ENCODE measurements at regions of chr15 and their contacts with region 1.

Region 1: GRCh38 chr15:33292717-33293307 is 18.0 kb upstream of the RYR3 start:
- DNase-seq: peak; percentile 69
- H3K4me3 ChIP-seq: no peak overlapping the region
- H3K27ac ChIP-seq: no peak overlapping the region
- H3K4me1 ChIP-seq: peaks cover 3% of the 10 kb centered on the region
- H3K27me3 ChIP-seq: peaks cover 10 to 19% of the 10 kb centered on the region in 2 experiments
- CTCF ChIP-seq: peak; percentile 57 to 59
- POLR2A ChIP-seq: no peak

Region 2: DNA sequence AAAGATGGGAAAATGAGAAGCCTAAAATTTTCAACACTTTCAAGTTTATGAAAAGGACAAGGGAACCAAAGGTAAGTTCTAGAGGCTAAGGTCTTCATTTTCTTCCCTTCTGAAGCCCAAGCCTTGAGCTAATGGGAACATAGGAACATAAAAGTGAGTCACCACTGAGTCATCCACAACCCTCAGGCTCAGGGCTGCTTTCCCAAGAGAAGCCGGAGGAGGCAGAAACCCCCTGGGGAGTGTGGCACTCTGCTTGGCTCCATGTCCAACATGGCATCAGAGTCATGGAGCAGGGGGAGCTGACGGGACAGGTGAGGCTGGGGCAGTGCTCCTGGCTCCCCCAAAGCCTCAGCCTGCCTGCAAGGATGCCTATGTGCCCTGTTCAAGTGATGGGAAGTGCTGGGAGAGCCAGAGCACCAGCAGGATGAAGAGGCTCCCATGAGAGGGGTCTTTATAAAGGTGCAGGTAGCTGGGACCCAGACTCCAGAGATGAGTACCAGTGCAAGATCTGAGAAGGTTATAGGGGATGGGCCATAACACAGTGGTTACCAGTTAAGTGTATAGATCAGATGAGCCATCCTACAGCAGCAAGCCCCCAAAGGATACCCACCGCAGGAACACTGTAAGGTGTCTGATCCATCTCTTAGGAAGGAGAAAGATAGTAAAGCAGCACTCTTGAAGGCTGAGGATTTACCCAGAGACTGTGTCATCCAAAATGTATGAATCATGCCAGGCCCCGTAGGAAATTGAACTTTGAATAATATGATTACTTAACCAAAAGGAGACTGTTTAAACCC is 13.8 kb before region 1 on chr15:
- CTCF ChIA-PET with region 1: interaction called, 41 read pairs
- POLR2A ChIA-PET with region 1: no interaction called
- dilution Hi-C with region 1: no loop called
- intact Hi-C with region 1: no loop called
- DNase-seq: peak; percentile 76
- H3K4me3 ChIP-seq: no peak overlapping the region
- H3K27ac ChIP-seq: no peak overlapping the region
- H3K4me1 ChIP-seq: peaks cover 7% of the 10 kb centered on the region
- H3K27me3 ChIP-seq: no peaks in the 10 kb centered on the region
- CTCF ChIP-seq: peak in 1 of 2 donors; percentile 20
- POLR2A ChIP-seq: no peak

Region 3: DNA sequence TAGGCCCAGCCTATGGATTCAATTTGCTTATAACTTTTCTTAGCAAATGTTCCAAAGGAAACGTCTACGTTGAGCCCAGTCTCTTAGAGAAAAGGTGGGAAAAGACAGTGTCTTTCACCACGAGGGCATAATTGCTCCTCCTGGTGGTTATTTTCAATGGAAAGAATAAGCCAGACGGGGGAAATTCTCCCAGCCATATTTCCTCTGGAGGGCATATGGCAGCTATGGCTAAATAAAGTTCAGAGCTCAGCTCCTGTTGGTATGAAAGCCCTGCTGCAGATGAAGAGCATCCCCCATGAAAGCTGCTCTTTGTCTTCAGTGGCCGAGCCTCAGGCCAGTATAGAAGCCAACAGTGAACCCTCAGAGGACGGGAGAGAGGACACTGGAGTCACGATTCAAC is 315.9 kb after region 1 on chr15:
- CTCF ChIA-PET with region 1: interaction called, 10 read pairs
- POLR2A ChIA-PET with region 1: no interaction called
- dilution Hi-C with region 1: no loop called
- intact Hi-C with region 1: no loop called
- DNase-seq: no peak
- H3K4me3 ChIP-seq: no peak overlapping the region
- H3K27ac ChIP-seq: no peak overlapping the region
- H3K4me1 ChIP-seq: no peaks in the 10 kb centered on the region
- H3K27me3 ChIP-seq: no peaks in the 10 kb centered on the region
- CTCF ChIP-seq: no peak
- POLR2A ChIP-seq: no peak

Region 4: DNA sequence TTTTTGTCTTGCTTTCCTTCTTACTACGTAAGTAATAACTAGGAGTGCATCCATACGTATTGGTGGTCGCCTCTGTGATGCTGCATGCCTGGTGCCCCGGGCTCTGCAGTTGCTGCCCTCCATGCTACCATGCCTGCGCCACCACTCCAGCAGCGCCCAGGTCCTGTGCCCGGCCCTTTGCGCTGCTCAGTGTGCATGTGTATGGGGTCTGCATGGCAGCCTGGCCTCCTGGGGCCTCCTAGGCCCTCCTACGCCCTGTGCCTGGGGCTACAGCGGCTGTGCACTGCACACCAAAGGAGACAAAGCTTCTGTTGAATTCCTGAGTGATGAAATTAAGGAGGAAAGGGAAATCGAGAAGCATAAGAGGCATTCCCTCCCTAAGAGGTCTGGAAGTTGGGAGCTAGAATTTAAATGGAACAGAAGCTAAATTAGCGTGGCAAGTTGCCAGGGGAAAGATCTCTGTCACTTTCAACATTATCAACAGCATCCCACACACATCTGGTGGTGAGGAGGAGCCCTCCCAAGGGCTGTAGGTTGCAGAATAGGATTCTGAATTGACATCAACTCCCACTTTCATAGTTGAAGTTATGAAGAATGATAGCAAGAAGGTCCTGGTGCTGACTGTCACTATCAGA is 400.5 kb after region 1 on chr15:
- CTCF ChIA-PET with region 1: interaction called, 11 read pairs
- POLR2A ChIA-PET with region 1: no interaction called
- dilution Hi-C with region 1: no loop called
- intact Hi-C with region 1: no loop called
- DNase-seq: no peak
- H3K4me3 ChIP-seq: no peak overlapping the region
- H3K27ac ChIP-seq: no peak overlapping the region
- H3K4me1 ChIP-seq: no peaks in the 10 kb centered on the region
- H3K27me3 ChIP-seq: peaks cover 0 to 3% of the 10 kb centered on the region in 2 experiments
- CTCF ChIP-seq: no peak
- POLR2A ChIP-seq: no peak

Region 5: DNA sequence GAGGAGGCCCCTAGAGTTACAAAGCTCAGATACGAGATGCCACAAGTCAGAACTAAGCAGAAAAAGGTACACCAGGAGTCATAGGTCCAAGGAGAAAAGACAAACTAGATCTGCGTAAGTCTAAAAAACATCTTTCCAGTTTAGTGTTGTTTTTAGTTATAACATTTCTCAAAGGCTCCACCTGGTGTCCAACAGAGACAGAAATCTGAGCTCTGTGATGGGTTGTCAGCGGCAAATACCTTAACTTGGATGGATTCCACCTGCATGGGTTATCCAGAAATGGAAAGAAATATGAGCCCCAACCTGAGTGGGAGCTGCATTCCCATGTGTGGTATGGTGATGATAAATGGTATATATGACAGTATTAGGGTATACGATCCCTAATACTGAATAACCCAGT is 436.8 kb after region 1 on chr15:
- CTCF ChIA-PET with region 1: interaction called, 277 read pairs
- POLR2A ChIA-PET with region 1: no interaction called
- dilution Hi-C with region 1: no loop called
- intact Hi-C with region 1: loop called (anchors 1 kb)
- DNase-seq: peak; percentile 34
- H3K4me3 ChIP-seq: no peak overlapping the region
- H3K27ac ChIP-seq: no peak overlapping the region
- H3K4me1 ChIP-seq: peaks cover 8% of the 10 kb centered on the region
- H3K27me3 ChIP-seq: no peaks in the 10 kb centered on the region
- CTCF ChIP-seq: peak; percentile 19 to 28
- POLR2A ChIP-seq: no peak

Region 6: DNA sequence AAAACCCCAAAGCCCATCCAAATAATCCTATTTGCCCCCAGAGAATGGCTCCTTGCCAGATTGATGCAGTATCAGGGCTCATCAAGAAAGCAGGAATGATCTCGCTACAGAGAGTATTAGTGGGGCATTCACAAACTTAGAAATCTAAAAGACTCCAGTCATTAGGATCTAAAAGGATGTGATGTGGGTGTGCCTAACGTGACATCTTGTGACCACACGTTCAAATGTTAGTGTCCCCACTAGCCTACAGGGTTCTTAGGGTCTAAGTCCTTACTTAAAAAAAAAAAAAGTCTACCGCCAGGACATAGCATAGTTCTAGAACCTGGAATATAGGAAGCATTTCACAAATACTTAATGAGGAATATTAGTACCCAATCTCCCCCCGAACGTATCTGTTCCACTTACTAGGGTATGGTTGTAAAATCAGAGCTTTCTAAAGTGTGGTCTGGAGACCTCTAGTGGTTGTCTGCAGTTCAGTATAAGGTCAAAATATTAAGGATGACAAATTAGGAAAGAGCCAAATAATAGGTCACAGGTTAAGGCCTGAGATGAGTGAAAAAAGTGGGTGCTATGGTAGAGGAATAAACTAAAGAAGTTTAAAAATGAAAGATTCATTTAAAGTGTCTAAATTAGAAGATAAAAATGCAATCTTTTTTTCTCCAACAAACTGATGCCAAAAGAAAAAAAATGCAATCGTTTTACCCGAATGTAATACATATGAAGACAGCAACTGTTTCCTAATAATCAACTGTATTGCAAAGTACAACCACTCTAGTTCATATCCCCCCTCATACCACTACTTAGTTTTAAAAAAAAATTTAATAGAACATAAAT is 671.2 kb after region 1 on chr15:
- CTCF ChIA-PET with region 1: interaction called, 13 read pairs
- POLR2A ChIA-PET with region 1: no interaction called
- dilution Hi-C with region 1: no loop called
- intact Hi-C with region 1: no loop called
- DNase-seq: peak; percentile 44
- H3K4me3 ChIP-seq: no peak overlapping the region
- H3K27ac ChIP-seq: no peak overlapping the region
- H3K4me1 ChIP-seq: peaks cover 3% of the 10 kb centered on the region
- H3K27me3 ChIP-seq: no peaks in the 10 kb centered on the region
- CTCF ChIP-seq: peak; percentile 34 to 45
- POLR2A ChIP-seq: no peak

Measured in endothelial cell of umbilical vein (primary cell).